ENCODE measurements at regions of chr1 and their contacts with region 1.

Region 1: GRCh38 chr1:65687428-65688214 is 105.1 kb upstream of the PDE4B start:
- DNase-seq: peak; percentile 76 to 94
- H3K4me3 ChIP-seq: no peak overlapping the region
- H3K27ac ChIP-seq: no peak overlapping the region
- H3K4me1 ChIP-seq: 0 out of 2 replicates have a peak, but pooled peaks cover 4% of the 10 kb centered on the region
- H3K27me3 ChIP-seq: no peaks in the 10 kb centered on the region
- CTCF ChIP-seq: peak; percentile 89

Region 2: GRCh38 chr1:64686828-64687724 is 1000.5 kb before region 1 on chr1:
- CTCF ChIA-PET with region 1: interaction called, 4 read pairs
- POLR2A ChIA-PET with region 1: no interaction called
- intact Hi-C with region 1: loop called (anchors 1 kb)
- DNase-seq: peak; percentile 31 to 43
- H3K4me3 ChIP-seq: no peak overlapping the region
- H3K27ac ChIP-seq: no peak overlapping the region
- H3K4me1 ChIP-seq: no peaks in the 10 kb centered on the region; the same call in 1 of the 2 replicates
- H3K27me3 ChIP-seq: no peaks in the 10 kb centered on the region
- CTCF ChIP-seq: peak; percentile 88

Region 3: DNA sequence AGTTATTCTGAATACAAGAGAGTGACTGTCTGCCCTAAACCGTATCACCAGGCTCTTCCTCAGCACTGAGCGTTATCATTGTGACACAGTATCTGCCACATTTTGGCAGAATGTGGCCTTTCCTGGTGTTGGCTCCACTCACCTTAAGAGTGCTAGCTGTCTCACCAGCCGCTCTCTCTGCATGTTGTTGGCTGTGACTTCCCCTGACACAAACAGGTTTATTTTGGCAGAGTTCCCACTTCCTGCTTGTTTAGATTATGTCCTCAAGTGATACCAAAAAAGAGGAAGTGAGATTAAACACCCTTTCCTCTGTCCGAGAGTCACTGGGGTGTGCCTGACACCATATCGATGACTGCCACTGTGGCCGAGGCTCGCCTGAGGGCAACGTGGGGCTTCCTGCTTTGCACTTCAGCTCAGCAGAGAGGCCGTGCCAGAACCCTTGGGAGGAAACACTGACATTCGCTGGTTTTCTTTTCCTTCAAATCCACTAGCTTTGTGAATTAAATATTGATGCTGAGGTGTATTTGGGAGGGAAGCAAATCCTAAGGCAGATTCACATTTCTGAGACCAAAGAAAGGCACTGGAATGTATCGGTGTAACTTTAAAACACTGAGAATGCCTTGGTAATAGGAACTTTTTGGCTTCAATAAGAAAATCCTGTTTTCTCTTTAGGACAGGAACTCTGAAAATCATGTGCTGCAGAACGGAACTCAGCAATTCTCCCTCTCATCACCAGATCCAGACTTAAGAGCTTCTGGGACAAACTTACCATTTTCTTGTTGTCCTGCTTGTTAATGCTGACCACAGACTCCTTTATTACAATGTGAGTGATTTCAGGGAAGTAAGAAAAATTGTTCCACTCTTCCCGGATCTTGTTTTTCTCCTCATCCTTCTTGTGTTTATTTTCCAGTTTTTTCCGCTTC is 823.3 kb before region 1 on chr1:
- CTCF ChIA-PET with region 1: no interaction called
- POLR2A ChIA-PET with region 1: no interaction called
- intact Hi-C with region 1: loop called (anchors 5 kb)
- DNase-seq: peak in 1 of 2 experiments; percentile 84
- H3K4me3 ChIP-seq: no peak overlapping the region
- H3K27ac ChIP-seq: peak overlapping the region; percentile 59
- H3K4me1 ChIP-seq: peaks cover 6% of the 10 kb centered on the region; the same call in 1 of the 2 replicates
- H3K27me3 ChIP-seq: no peaks in the 10 kb centered on the region
- CTCF ChIP-seq: no peak

Region 4: DNA sequence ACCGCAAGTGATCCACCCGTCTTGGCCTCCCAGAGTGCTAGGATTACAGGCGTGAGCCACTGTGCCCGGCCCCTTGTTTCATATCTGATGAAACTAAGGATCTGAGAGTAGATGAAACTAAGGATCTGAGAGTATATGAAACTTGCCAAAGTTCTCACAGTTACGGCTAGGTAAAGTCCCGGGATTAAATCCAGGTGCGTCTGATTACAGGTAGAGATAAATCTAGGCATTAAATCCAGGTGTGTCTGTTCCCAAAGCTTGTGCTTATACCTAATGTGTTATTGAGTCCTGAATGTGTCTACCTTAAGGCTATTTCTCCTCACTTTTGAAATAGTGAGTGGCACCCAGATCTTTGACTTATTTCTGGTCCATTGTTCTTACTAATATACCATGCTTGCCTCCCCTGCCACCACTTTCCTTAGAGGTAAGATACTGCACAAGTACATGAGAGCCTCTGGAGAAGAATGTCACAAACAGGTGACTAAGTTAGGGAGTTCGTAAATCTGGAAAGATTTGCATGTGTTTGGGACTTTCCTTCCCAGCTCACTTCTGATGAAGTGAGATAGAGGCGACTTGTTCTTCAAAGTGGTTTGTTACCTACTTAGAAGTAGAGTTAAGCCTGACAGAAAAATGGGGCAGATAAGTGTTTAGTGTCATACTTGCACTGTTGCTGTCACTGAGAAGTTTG is 473.1 kb before region 1 on chr1:
- CTCF ChIA-PET with region 1: interaction called, 7 read pairs
- POLR2A ChIA-PET with region 1: no interaction called
- intact Hi-C with region 1: loop called (anchors 1 kb)
- DNase-seq: no peak
- H3K4me3 ChIP-seq: no peak overlapping the region
- H3K27ac ChIP-seq: no peak overlapping the region
- H3K4me1 ChIP-seq: no peaks in the 10 kb centered on the region
- H3K27me3 ChIP-seq: no peaks in the 10 kb centered on the region
- CTCF ChIP-seq: no peak

Region 5: DNA sequence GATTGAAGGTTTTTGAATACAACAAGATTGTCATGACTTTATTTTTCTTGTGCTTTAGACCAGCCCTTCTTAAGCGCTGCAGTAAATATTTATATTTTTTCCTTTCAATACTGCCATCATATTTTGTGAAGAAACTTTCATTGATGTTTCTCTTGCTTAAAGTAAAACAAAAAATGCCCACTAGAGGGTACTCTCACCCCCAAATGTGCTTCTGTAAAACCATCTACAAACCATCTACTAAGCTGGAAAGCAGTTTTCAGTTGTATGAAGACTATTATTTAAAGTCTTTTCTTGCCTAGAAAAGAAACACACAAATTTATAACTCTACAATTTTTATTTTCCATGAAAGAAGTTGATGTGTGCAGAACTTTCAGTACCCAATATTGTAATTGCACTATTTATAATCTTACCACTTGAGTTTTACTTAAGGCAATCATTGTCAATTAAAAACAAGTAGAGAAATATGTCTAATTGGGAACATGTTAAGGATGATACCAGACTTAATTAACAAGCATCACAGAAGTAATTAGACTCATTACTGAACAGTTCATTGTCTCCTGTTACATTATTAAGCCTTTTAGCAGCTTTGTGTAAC is 256.4 kb before region 1 on chr1:
- CTCF ChIA-PET with region 1: no interaction called
- POLR2A ChIA-PET with region 1: interaction called, 6 read pairs
- intact Hi-C with region 1: loop called (anchors 1 kb)
- DNase-seq: no peak
- H3K4me3 ChIP-seq: no peak overlapping the region
- H3K27ac ChIP-seq: no peak overlapping the region
- H3K4me1 ChIP-seq: peaks cover 22% of the 10 kb centered on the region
- H3K27me3 ChIP-seq: no peaks in the 10 kb centered on the region
- CTCF ChIP-seq: peak; percentile 70

Region 6: GRCh38 chr1:65525266-65526048 is 162.2 kb before region 1 on chr1:
- CTCF ChIA-PET with region 1: no interaction called
- POLR2A ChIA-PET with region 1: no interaction called
- intact Hi-C with region 1: no loop called
- DNase-seq: no peak
- H3K4me3 ChIP-seq: no peak overlapping the region
- H3K27ac ChIP-seq: no peak overlapping the region
- H3K4me1 ChIP-seq: no peaks in the 10 kb centered on the region
- H3K27me3 ChIP-seq: no peaks in the 10 kb centered on the region
- CTCF ChIP-seq: no peak

Region 7: GRCh38 chr1:66242646-66243547 is 555.3 kb after region 1 on chr1:
- CTCF ChIA-PET with region 1: no interaction called
- POLR2A ChIA-PET with region 1: no interaction called
- intact Hi-C with region 1: loop called (anchors 10 kb)
- DNase-seq: peak; percentile 74 to 83
- H3K4me3 ChIP-seq: no peak overlapping the region
- H3K27ac ChIP-seq: no peak overlapping the region
- H3K4me1 ChIP-seq: no peaks in the 10 kb centered on the region
- H3K27me3 ChIP-seq: 0 out of 2 replicates have a peak, but pooled peaks cover 4% of the 10 kb centered on the region
- CTCF ChIP-seq: peak; percentile 95